Posterior vena cava (tissue), 2 donors: ENCODE measurements at regions of chr7 and their contacts with region 1.

Region 1: GRCh38 chr7:85172530-85172941 is 14.3 kb downstream of the SEMA3D start:
- DNase-seq: no peak

Region 2: GRCh38 chr7:85104432-85105205 is 67.9 kb before region 1 on chr7:
- intact Hi-C with region 1: loop called in 1 of 2 experiments (anchors 10 kb)
- DNase-seq: no peak

Region 3: GRCh38 chr7:85226361-85227085 is 54.0 kb after region 1 on chr7:
- intact Hi-C with region 1: no loop called
- DNase-seq: no peak